Activated CD4-positive, alpha-beta T cell treated with anti-CD3 and anti-CD28 coated beads for 36 hours (primary cell): ENCODE measurements at regions of chr2 and their contacts with region 1.

Region 1: GRCh38 chr2:177857538-177857937 is 215.0 kb downstream of the PDE11A start:
- DNase-seq: no peak
- ATAC-seq: no peak
- H3K4me3 Mint-ChIP-seq: no peak overlapping the region
- H3K27ac Mint-ChIP-seq: no peak overlapping the region
- H3K4me1 Mint-ChIP-seq: no peaks in the 10 kb centered on the region
- H3K27me3 Mint-ChIP-seq: peaks cover 4% of the 10 kb centered on the region

Region 2: GRCh38 chr2:177799531-177799930 is 58.0 kb before region 1 on chr2:
- CTCF ChIA-PET with region 1: no interaction called
- POLR2A ChIA-PET with region 1: no interaction called
- intact Hi-C with region 1: loop called in 1 of 2 experiments (anchors 2 kb)
- DNase-seq: no peak
- ATAC-seq: no peak
- H3K4me3 Mint-ChIP-seq: no peak overlapping the region
- H3K27ac Mint-ChIP-seq: no peak overlapping the region
- H3K4me1 Mint-ChIP-seq: no peaks in the 10 kb centered on the region
- H3K27me3 Mint-ChIP-seq: peaks cover 15% of the 10 kb centered on the region

Region 3: DNA sequence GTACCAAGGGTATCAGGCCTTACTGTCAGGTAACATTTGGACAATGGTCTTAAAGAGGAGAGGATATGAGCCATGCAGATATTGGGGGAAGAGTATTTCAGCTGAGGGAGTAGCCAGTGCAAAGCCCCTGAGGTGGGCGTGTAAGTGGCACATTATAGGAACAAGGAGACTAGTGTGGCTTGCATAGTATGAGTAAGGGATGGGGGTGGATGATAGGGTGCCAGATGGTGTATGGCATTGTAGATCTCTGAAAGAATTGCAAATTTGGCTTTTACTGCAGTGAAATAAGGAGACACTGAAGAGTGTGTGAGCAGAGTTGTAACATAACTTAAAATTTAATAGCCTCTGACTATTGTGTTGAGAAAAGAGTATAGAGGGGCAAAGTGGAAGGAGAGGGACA is 29.0 kb before region 1 on chr2:
- CTCF ChIA-PET with region 1: no interaction called
- POLR2A ChIA-PET with region 1: no interaction called
- intact Hi-C with region 1: no loop called
- DNase-seq: no peak
- ATAC-seq: no peak
- H3K4me3 Mint-ChIP-seq: no peak overlapping the region
- H3K27ac Mint-ChIP-seq: no peak overlapping the region
- H3K4me1 Mint-ChIP-seq: no peaks in the 10 kb centered on the region
- H3K27me3 Mint-ChIP-seq: peaks cover 6% of the 10 kb centered on the region

Region 4: GRCh38 chr2:178119179-178119922 is 261.8 kb after region 1 on chr2:
- CTCF ChIA-PET with region 1: no interaction called
- POLR2A ChIA-PET with region 1: no interaction called
- intact Hi-C with region 1: no loop called
- DNase-seq: no peak
- ATAC-seq: no peak
- H3K4me3 Mint-ChIP-seq: no peak overlapping the region
- H3K27ac Mint-ChIP-seq: no peak overlapping the region
- H3K4me1 Mint-ChIP-seq: peaks cover 15% of the 10 kb centered on the region
- H3K27me3 Mint-ChIP-seq: no peaks in the 10 kb centered on the region